Astrocyte of the cerebellum (primary cell): ENCODE measurements at regions of chr10 and their contacts with region 1.

Region 1: DNA sequence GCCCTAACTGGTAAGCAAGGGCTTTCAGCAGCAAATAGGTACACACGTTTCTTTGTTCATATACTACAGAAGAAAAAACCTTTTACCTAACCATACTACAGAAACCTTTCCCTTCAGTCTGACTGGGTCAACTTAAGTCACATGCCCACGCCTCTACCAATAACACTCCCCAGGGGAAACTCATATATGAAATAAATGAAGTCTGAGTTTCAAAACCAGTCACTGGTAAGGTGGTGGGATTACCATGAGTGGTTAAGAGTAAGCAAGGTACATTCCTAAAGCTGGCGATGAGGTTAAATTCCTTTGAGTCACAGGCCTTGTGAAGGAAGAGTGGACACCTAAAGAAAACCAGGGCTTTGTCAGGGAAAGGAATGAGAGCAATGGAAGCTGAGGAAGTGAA is 21.4 kb upstream of the KIF20B start:
- DNase-seq: no peak
- H3K4me3 ChIP-seq: no peak overlapping the region
- CTCF ChIP-seq: no peak

Region 2: DNA sequence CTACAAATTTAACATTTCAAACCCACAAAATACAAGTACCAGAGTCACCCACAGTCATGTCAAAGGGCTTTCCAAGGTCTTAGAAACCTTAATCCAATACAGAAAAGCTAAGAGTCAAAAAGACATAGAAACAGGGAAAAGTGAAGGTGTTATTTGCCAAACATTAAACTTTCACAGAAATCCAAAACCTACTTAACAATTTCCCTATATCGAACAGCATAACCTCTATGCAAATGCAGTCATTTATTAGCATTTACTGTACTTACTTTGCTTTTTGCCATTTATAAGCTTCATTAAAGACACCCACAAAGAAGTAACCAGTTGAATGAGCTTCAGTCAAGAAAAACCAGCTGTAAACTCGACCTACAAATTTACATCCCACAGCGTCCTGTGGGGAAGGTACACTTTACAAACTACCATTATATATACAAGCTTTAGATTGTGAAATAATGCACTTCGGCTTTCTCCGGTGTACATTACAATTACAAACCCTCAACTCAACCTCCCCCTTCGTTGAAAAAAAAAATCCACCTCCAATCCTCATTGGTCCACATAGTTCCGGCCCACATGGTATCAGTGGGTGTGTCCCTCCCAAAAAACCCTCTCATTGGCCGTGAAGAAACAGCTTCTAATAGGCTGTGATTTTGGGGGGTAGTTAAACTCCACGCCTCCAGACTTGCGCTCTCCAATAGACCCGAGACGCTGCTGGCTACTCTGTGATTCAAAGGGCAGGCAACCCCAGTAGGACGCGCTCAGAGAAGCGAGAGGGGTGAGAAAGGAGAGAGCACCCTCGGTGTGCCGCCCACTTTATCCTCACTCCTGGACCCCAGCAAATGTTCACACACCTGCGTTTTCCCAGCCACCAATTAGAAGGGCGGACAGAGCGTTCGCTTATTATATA is 36.3 kb before region 1 on chr10:
- in situ Hi-C with region 1: loop called (anchors 5 kb)
- DNase-seq: peak; percentile 81
- H3K4me3 ChIP-seq: peak overlapping the region; percentile 77
- CTCF ChIP-seq: no peak